Transverse colon (tissue), 4 donors: ENCODE measurements at regions of chr13 and their contacts with region 1.

Region 1: DNA sequence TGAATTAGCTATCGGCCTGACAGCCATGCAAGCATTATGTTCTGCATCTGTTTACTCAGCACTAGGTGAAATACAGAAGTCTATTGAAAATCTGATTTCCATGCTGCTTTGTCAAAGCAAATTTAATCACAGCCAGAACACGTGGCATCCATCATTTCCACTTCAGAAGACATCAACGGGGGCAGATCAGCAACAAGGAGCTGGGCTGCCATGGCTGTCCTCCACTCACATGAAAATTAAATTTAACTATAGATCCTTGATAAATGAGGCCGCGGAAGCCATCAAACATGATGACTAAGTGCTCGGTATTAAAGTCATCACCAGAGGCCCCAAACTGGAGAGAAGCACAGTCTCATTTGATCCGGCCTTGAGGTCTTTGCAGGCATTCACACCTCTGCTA is 443.5 kb downstream of the HS6ST3 start:
- DNase-seq: no peak
- H3K4me3 ChIP-seq: no peak overlapping the region
- H3K27ac ChIP-seq: no peak overlapping the region
- H3K4me1 ChIP-seq: no peaks in the 10 kb centered on the region
- H3K27me3 ChIP-seq: no peaks in the 10 kb centered on the region
- CTCF ChIP-seq: no peak
- EP300 ChIP-seq: no peak
- POLR2A ChIP-seq: no peak

Region 2: GRCh38 chr13:96771486-96772367 is 238.3 kb after region 1 on chr13:
- in situ Hi-C with region 1: no loop called
- intact Hi-C with region 1: loop called (anchors 5 kb)
- DNase-seq: no peak
- H3K4me3 ChIP-seq: no peak overlapping the region
- H3K27ac ChIP-seq: no peak overlapping the region
- H3K4me1 ChIP-seq: no peaks in the 10 kb centered on the region
- H3K27me3 ChIP-seq: no peaks in the 10 kb centered on the region
- CTCF ChIP-seq: no peak
- EP300 ChIP-seq: no peak
- POLR2A ChIP-seq: no peak